PC-9 (cell line): ENCODE measurements at regions of chr1 and their contacts with region 1.

Region 1: GRCh38 chr1:116397728-116398127 is 24.7 kb downstream of the ATP1A1 start:
- DNase-seq: no peak
- H3K4me3 ChIP-seq: no peak overlapping the region
- H3K27ac ChIP-seq: no peak overlapping the region
- H3K4me1 ChIP-seq: no peaks in the 10 kb centered on the region
- H3K27me3 ChIP-seq: no peaks in the 10 kb centered on the region
- CTCF ChIP-seq: no peak

Region 2: GRCh38 chr1:116006486-116006964 is 391.2 kb before region 1 on chr1:
- CTCF ChIA-PET with region 1: no interaction called
- POLR2A ChIA-PET with region 1: no interaction called
- intact Hi-C with region 1: no loop called
- DNase-seq: no peak
- H3K4me3 ChIP-seq: no peak overlapping the region
- H3K27ac ChIP-seq: no peak overlapping the region
- H3K4me1 ChIP-seq: no peaks in the 10 kb centered on the region
- H3K27me3 ChIP-seq: no peaks in the 10 kb centered on the region
- CTCF ChIP-seq: no peak

Region 3: DNA sequence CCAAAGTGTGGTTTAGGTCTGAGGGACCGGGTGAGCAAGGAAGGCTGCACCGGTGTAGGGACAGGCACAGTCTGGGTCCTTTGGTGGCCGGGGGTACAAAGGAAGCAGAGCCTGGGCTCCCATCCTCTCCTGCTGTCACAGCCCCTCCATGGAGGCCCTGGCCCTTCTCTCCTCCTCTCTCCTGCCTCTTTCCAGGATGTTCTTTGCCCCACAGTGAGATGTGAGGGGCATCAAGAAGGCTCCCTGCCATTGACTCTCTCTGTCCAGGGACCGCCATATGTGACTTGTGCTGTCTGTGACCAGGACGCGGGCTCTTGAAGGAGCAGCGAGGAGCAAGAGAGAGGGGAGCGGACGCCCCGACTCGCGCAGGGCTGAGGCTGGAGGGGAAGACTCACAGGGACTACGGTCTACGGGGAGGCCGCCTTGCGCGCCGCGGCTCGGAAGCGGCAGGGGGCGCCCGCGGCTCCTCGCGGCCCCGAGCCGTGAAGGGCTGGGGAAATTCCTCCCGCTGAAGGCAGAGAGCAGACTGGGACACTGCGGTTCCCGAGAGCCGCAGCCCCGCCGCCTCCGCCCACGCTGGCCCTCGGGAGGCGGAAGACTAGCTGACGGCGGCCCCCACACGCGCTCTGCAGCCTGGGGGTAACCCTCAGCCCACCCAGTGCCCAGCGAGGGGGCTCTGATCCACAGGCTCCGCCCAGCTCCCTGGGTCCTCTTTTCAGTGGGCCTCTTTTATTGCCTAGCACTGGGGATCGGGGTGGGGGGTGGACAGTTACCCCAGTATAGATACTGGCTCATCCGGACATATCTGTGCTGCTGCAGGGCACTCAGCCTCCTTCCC is 245.8 kb before region 1 on chr1:
- CTCF ChIA-PET with region 1: no interaction called
- POLR2A ChIA-PET with region 1: no interaction called
- intact Hi-C with region 1: loop called (anchors 5 kb)
- DNase-seq: peak; percentile 65 to 80
- H3K4me3 ChIP-seq: peak overlapping the region; percentile 60
- H3K27ac ChIP-seq: no peak overlapping the region
- H3K4me1 ChIP-seq: peaks cover 6% of the 10 kb centered on the region; the same call in 1 of the 2 replicates
- H3K27me3 ChIP-seq: no peaks in the 10 kb centered on the region
- CTCF ChIP-seq: peak; percentile 92

Region 4: DNA sequence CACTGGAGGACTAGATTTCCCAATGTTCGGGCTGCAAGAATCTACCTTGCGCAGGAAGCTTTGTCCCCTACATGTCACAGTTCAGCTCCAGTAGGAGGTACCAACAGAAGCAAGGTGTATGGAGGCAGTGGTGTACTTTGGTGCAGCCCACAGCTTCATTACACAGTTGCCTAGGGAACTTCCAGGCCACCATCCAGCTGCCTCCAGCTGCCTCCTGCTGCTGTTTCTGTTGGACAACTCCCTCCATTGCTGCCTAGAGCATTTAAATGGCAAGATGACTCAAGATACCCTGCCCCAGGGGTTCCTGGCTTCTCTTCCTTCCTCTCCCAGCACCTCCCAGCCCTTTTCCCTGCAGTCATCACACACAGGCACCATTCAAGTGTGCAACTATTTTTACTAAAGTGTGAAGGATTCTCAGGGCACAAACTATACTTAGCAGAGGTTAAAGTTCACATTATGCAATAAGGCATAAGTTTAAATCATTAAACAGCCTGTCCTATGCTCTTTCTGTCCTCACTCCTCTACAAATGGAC is 63.6 kb before region 1 on chr1:
- CTCF ChIA-PET with region 1: no interaction called
- POLR2A ChIA-PET with region 1: no interaction called
- intact Hi-C with region 1: no loop called
- DNase-seq: peak; percentile 32 to 89
- H3K4me3 ChIP-seq: no peak overlapping the region
- H3K27ac ChIP-seq: peak overlapping the region; percentile 76
- H3K4me1 ChIP-seq: peaks cover 62% of the 10 kb centered on the region
- H3K27me3 ChIP-seq: no peaks in the 10 kb centered on the region
- CTCF ChIP-seq: no peak

Region 5: DNA sequence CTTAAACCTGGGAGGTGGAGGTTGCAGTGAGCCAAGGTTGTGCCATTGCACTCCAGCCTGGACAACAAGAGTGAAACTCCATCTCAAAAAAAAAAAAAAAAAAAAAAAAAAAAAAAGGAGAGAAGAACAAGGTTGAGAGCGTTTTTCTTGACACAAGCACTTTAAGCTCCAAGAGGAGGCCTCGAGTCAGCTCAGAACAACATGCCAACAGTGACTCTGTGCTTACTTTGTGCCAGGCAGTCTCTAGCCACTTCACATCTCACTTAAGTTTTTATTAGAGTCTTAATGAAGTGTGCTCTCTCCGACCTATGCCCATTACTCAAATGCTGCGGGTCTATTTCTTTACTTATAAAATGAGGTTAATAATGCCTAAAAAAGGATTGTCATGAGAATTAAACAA is 11.7 kb before region 1 on chr1:
- CTCF ChIA-PET with region 1: no interaction called
- POLR2A ChIA-PET with region 1: interaction called, 24 read pairs
- intact Hi-C with region 1: no loop called
- DNase-seq: no peak
- H3K4me3 ChIP-seq: no peak overlapping the region
- H3K27ac ChIP-seq: no peak overlapping the region
- H3K4me1 ChIP-seq: 0 out of 2 replicates have a peak, but pooled peaks cover 13% of the 10 kb centered on the region
- H3K27me3 ChIP-seq: no peaks in the 10 kb centered on the region
- CTCF ChIP-seq: no peak

Region 6: DNA sequence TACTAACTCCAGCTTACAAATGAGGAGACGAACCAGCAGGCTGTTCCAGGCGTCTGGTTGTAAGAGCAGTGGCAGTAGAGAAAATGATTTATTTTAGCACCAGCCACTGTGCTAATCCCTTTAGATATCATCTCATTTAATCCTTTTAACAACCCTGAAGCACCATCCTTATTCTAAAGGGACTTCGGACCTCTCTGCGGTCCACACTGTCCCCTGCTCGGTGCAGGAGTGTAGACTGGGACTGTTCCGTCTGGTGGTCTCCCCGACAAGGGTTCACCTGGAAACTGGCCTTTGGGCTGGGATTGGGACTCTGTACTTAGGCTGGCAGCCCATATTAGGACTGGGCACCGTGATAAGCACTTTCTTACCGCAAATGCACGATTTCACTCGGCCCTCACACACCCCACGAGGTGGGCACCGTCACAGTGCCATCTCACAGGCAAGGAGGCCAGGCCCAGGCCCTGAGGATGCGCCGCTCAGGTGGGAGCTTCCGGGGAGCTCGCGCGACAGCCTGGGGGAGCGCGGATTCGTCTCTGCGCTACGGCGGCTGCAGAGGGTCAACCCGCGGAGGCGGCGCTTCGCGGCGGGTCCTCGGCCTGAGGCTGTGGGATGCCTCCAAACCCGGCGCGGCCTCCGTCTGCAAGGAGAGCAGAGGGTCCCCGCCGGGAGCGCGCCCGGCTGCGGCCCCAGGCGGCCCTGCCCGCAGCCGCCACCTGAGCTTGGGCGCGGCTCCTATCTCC is 20.5 kb after region 1 on chr1:
- CTCF ChIA-PET with region 1: no interaction called
- POLR2A ChIA-PET with region 1: no interaction called
- intact Hi-C with region 1: no loop called
- DNase-seq: peak; percentile 69 to 82
- H3K4me3 ChIP-seq: peak overlapping the region; percentile 96
- H3K27ac ChIP-seq: peak overlapping the region; percentile 55
- H3K4me1 ChIP-seq: peaks cover 17% of the 10 kb centered on the region
- H3K27me3 ChIP-seq: no peaks in the 10 kb centered on the region
- CTCF ChIP-seq: no peak